ENCODE measurements at regions of chr6 and their contacts with region 1.

Region 1: GRCh38 chr6:106085984-106086813 is at the start of gene PRDM1:
- DNase-seq: peak; percentile 53 to 94 (median 76)
- ATAC-seq: peak; percentile 85
- H3K4me3 ChIP-seq: peak within 1 kb of the TSS; percentile 44 to 45
- H3K4me3 Mint-ChIP-seq: peak within 1 kb of the TSS; percentile 84
- H3K27ac ChIP-seq: no peak within 1 kb of the TSS
- H3K27ac Mint-ChIP-seq: peak within 1 kb of the TSS; percentile 38
- H3K4me1 ChIP-seq: peaks cover 27% of the 10 kb centered on the region
- H3K4me1 Mint-ChIP-seq: peaks cover 70% of the 10 kb centered on the region
- H3K27me3 ChIP-seq: peaks cover 0 to 24% of the 10 kb centered on the region in 2 experiments
- H3K27me3 Mint-ChIP-seq: peaks cover 42% of the 10 kb centered on the region
- CTCF ChIP-seq: no peak
- total RNA-seq, gene PRDM1: 35.5 to 38.4 TPM

Region 2: GRCh38 chr6:105452924-105453756 is 633.1 kb before region 1 on chr6:
- CTCF ChIA-PET with region 1: interaction called, 3 read pairs
- POLR2A ChIA-PET with region 1: interaction called, 3 read pairs
- intact Hi-C with region 1: loop called in 1 of 2 experiments (anchors 10 kb)
- DNase-seq: peak; percentile 24 to 90 (median 61)
- ATAC-seq: peak; percentile 96
- H3K4me3 ChIP-seq: peak overlapping the region; percentile 18 to 56
- H3K4me3 Mint-ChIP-seq: peak overlapping the region; percentile 78
- H3K27ac ChIP-seq: peak overlapping the region; percentile 51 to 91
- H3K27ac Mint-ChIP-seq: peak overlapping the region; percentile 94
- H3K4me1 ChIP-seq: peaks cover 23% of the 10 kb centered on the region
- H3K4me1 Mint-ChIP-seq: peaks cover 41% of the 10 kb centered on the region
- H3K27me3 ChIP-seq: no peaks in the 10 kb centered on the region
- H3K27me3 Mint-ChIP-seq: no peaks in the 10 kb centered on the region
- CTCF ChIP-seq: no peak

Region 3: DNA sequence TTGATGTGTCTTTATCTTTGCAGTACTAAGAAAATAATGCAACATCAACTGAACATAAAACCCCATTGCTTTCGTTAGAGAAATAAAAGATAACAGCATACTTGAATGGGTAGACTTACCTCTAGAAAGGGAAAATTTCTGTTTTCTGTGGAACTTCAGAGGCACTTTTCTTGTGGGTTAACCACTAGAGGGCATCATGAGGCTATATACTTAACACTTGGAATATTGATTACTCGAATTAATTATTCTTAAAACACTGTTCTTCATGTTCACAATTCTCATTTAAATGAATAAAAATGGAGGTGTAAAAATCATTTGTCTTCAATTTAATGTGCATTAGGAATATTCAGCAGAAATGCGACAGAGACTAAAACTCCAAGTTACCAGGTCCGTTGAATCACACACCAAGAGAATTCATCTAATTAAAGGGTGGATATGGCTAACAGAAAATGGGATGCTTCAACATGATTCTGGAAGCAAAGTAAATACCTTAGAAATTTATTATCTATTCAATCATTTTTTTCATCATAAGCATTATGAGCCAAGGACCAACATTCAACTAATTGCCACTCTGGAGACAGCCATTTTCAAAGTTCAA is 352.5 kb before region 1 on chr6:
- CTCF ChIA-PET with region 1: no interaction called
- POLR2A ChIA-PET with region 1: no interaction called
- intact Hi-C with region 1: loop called (anchors 5 to 10 kb)
- DNase-seq: peak in 2 of 9 experiments; percentile 53 to 64
- ATAC-seq: no peak
- H3K4me3 ChIP-seq: no peak overlapping the region
- H3K4me3 Mint-ChIP-seq: no peak overlapping the region
- H3K27ac ChIP-seq: no peak overlapping the region
- H3K27ac Mint-ChIP-seq: no peak overlapping the region
- H3K4me1 ChIP-seq: no peaks in the 10 kb centered on the region
- H3K4me1 Mint-ChIP-seq: peaks cover 7% of the 10 kb centered on the region
- H3K27me3 ChIP-seq: no peaks in the 10 kb centered on the region
- H3K27me3 Mint-ChIP-seq: no peaks in the 10 kb centered on the region
- CTCF ChIP-seq: peak; percentile 73

Region 4: GRCh38 chr6:106124437-106125430 is 38.5 kb after region 1 on chr6:
- CTCF ChIA-PET with region 1: no interaction called
- POLR2A ChIA-PET with region 1: no interaction called
- intact Hi-C with region 1: loop called in 1 of 2 experiments (anchors 5 kb)
- DNase-seq: no peak
- ATAC-seq: no peak
- H3K4me3 ChIP-seq: no peak overlapping the region
- H3K4me3 Mint-ChIP-seq: no peak overlapping the region
- H3K27ac ChIP-seq: no peak overlapping the region
- H3K27ac Mint-ChIP-seq: no peak overlapping the region
- H3K4me1 ChIP-seq: no peaks in the 10 kb centered on the region
- H3K4me1 Mint-ChIP-seq: peaks cover 8% of the 10 kb centered on the region
- H3K27me3 ChIP-seq: no peaks in the 10 kb centered on the region
- H3K27me3 Mint-ChIP-seq: peaks cover 35% of the 10 kb centered on the region
- CTCF ChIP-seq: no peak

Region 5: GRCh38 chr6:106136845-106137244 is 50.6 kb after region 1 on chr6:
- CTCF ChIA-PET with region 1: no interaction called
- POLR2A ChIA-PET with region 1: no interaction called
- intact Hi-C with region 1: no loop called
- DNase-seq: no peak
- ATAC-seq: no peak
- H3K4me3 ChIP-seq: no peak overlapping the region
- H3K4me3 Mint-ChIP-seq: no peak overlapping the region
- H3K27ac ChIP-seq: no peak overlapping the region
- H3K27ac Mint-ChIP-seq: no peak overlapping the region
- H3K4me1 ChIP-seq: peaks cover 8% of the 10 kb centered on the region
- H3K4me1 Mint-ChIP-seq: peaks cover 13% of the 10 kb centered on the region
- H3K27me3 ChIP-seq: no peaks in the 10 kb centered on the region
- H3K27me3 Mint-ChIP-seq: peaks cover 4% of the 10 kb centered on the region
- CTCF ChIP-seq: no peak